ENCODE measurements at regions of chr17 and their contacts with region 1.

Region 1: GRCh38 chr17:21284319-21285163 is at the start of gene MAP2K3:
- DNase-seq: peak; percentile 99 to 100 (median 99)
- H3K4me3 ChIP-seq: peak within 1 kb of the TSS; percentile 90 to 94 (median 92)
- H3K4me3 Mint-ChIP-seq: peak within 1 kb of the TSS; percentile 99 to 100
- H3K27ac ChIP-seq: peak within 1 kb of the TSS; percentile 99 to 100
- H3K27ac Mint-ChIP-seq: peak within 1 kb of the TSS; percentile 99 to 100 (median 99)
- H3K4me1 ChIP-seq: peaks cover 68 to 69% of the 10 kb centered on the region in 2 donors
- H3K4me1 Mint-ChIP-seq: peaks cover 69% of the 10 kb centered on the region
- H3K27me3 ChIP-seq: no peaks in the 10 kb centered on the region
- H3K27me3 Mint-ChIP-seq: peaks cover 1 to 3% (median 2%) of the 10 kb centered on the region in 3 donors
- CTCF ChIP-seq: no peak
- polyA plus RNA-seq, gene MAP2K3: 107 to 166 (median 164) TPM

Region 2: GRCh38 chr17:21043286-21044232 is 241.0 kb before region 1 on chr17:
- intact Hi-C with region 1: loop called (anchors 5 to 10 kb)
- DNase-seq: peak in 1 of 3 donors; percentile 99
- H3K4me3 ChIP-seq: peak overlapping the region; percentile 41 to 89 (median 42)
- H3K4me3 Mint-ChIP-seq: peak overlapping the region; percentile 72 to 84
- H3K27ac ChIP-seq: peak overlapping the region; percentile 74 to 85
- H3K27ac Mint-ChIP-seq: peak overlapping the region; percentile 80 to 90 (median 85)
- H3K4me1 ChIP-seq: peaks cover 28 to 30% of the 10 kb centered on the region in 2 donors
- H3K4me1 Mint-ChIP-seq: peaks cover 25% of the 10 kb centered on the region
- H3K27me3 ChIP-seq: no peaks in the 10 kb centered on the region
- H3K27me3 Mint-ChIP-seq: peaks cover 0 to 2% (median 0%) of the 10 kb centered on the region in 3 donors
- CTCF ChIP-seq: peak; percentile 95

Region 3: DNA sequence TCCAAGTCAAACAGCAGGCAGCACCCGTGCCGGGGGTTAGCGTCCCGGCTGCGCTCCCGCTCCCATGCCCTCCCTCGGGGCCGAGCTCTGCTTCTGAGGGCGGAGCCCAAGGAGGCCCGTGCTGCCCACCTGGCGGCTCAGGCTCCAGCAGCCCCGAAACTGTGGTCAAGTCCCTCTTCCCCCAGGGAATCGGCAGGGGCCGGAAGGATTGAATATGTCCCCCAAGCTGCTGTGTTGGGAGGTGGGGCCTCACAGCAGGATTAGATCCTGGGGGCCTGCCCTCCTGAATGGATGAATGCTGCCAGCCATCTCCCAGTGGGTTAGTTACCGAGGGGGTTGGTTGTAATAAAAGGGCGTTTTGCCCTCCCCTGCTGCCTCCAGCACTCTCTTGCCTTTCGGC is 33.9 kb after region 1 on chr17:
- intact Hi-C with region 1: loop called (anchors 5 to 10 kb)
- DNase-seq: no peak
- H3K4me3 ChIP-seq: no peak overlapping the region
- H3K4me3 Mint-ChIP-seq: no peak overlapping the region
- H3K27ac ChIP-seq: no peak overlapping the region
- H3K27ac Mint-ChIP-seq: no peak overlapping the region
- H3K4me1 ChIP-seq: peaks cover 9 to 17% of the 10 kb centered on the region in 2 donors
- H3K4me1 Mint-ChIP-seq: peaks cover 14% of the 10 kb centered on the region
- H3K27me3 ChIP-seq: no peaks in the 10 kb centered on the region
- H3K27me3 Mint-ChIP-seq: peaks cover 4 to 8% (median 5%) of the 10 kb centered on the region in 3 donors
- CTCF ChIP-seq: no peak

Region 4: GRCh38 chr17:21353326-21354010 is 68.9 kb after region 1 on chr17:
- intact Hi-C with region 1: no loop called
- DNase-seq: peak in 1 of 3 donors; percentile 6
- H3K4me3 ChIP-seq: no peak overlapping the region
- H3K4me3 Mint-ChIP-seq: peak overlapping the region in 1 of 2 donors; percentile 10
- H3K27ac ChIP-seq: no peak overlapping the region
- H3K27ac Mint-ChIP-seq: peak overlapping the region in 1 of 7 donors; percentile 41
- H3K4me1 ChIP-seq: no peaks in the 10 kb centered on the region
- H3K4me1 Mint-ChIP-seq: peaks cover 7% of the 10 kb centered on the region
- H3K27me3 ChIP-seq: no peaks in the 10 kb centered on the region
- H3K27me3 Mint-ChIP-seq: peaks cover 3 to 14% (median 5%) of the 10 kb centered on the region in 3 donors
- CTCF ChIP-seq: no peak

Measured in CD14-positive monocyte (primary cell).